ENCODE measurements at regions of chr2 and their contacts with region 1.

Region 1: GRCh38 chr2:233443468-233444183 is 89.3 kb downstream of the DGKD start:
- DNase-seq: peak; percentile 90 to 95
- H3K4me3 ChIP-seq: no peak overlapping the region
- H3K27ac ChIP-seq: peak overlapping the region; percentile 59 to 81 (median 72)
- H3K4me1 ChIP-seq: peaks cover 45 to 94% (median 61%) of the 10 kb centered on the region in 4 donors
- H3K27me3 ChIP-seq: no peaks in the 10 kb centered on the region
- CTCF ChIP-seq: peak in 5 of 7 experiments; percentile 62 to 93 (median 79)
- EP300 ChIP-seq: no peak
- POLR2A ChIP-seq: no peak

Region 2: GRCh38 chr2:233353769-233354499 is 89.7 kb before region 1 on chr2 and contains the start of gene DGKD:
- intact Hi-C with region 1: loop called (anchors 10 kb)
- DNase-seq: peak; percentile 69 to 88
- H3K4me3 ChIP-seq: peak within 1 kb of the TSS; percentile 67 to 98 (median 83)
- H3K27ac ChIP-seq: peak within 1 kb of the TSS; percentile 73 to 87 (median 82)
- H3K4me1 ChIP-seq: peaks cover 30 to 81% (median 46%) of the 10 kb centered on the region in 4 donors
- H3K27me3 ChIP-seq: no peaks in the 10 kb centered on the region
- CTCF ChIP-seq: peak in 4 of 7 experiments; percentile 31 to 91 (median 68)
- EP300 ChIP-seq: no peak
- POLR2A ChIP-seq: no peak
- total RNA-seq, gene DGKD: 191 to 471 (median 216) TPM

Region 3: DNA sequence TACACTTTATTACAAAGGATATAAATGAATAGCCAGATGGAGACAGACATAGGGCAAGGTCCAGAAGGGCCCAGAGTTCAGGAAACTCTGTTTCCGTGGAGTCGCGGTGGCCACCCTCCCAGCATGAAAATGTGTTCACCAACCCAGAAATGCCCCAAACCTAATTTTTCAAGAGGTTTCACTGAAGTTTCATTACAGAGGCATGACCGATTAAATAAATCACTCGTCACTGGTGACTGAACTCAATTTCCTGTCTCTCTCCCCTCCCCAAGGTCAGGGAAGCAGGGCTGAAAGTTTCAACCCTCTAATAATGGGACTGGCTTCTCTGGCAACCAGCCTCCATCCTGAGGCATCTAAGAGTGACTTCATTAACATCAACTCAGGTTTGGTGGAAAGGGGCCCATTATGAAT is 100.6 kb after region 1 on chr2:
- intact Hi-C with region 1: no loop called
- DNase-seq: peak in 1 of 2 donors; percentile 5
- H3K4me3 ChIP-seq: no peak overlapping the region
- H3K27ac ChIP-seq: no peak overlapping the region
- H3K4me1 ChIP-seq: no peaks in the 10 kb centered on the region
- H3K27me3 ChIP-seq: no peaks in the 10 kb centered on the region
- CTCF ChIP-seq: no peak
- EP300 ChIP-seq: no peak
- POLR2A ChIP-seq: no peak

Region 4: GRCh38 chr2:233566141-233566960 is 122.7 kb after region 1 on chr2 and contains the start of gene USP40:
- intact Hi-C with region 1: no loop called
- DNase-seq: peak; percentile 89 to 96
- H3K4me3 ChIP-seq: peak within 1 kb of the TSS; percentile 77 to 96 (median 90)
- H3K27ac ChIP-seq: peak within 1 kb of the TSS; percentile 86 to 99 (median 94)
- H3K4me1 ChIP-seq: peaks cover 10 to 22% (median 16%) of the 10 kb centered on the region in 4 donors
- H3K27me3 ChIP-seq: no peaks in the 10 kb centered on the region
- CTCF ChIP-seq: peak in 1 of 7 experiments; percentile 6
- EP300 ChIP-seq: no peak
- POLR2A ChIP-seq: peak in 1 of 4 donors; percentile 69
- total RNA-seq, gene USP40: 30.3 to 186 (median 34.5) TPM

Measured in stomach (tissue), 19 donors.